H1 (cell line): ENCODE measurements at regions of chr7 and their contacts with region 1.

Region 1: DNA sequence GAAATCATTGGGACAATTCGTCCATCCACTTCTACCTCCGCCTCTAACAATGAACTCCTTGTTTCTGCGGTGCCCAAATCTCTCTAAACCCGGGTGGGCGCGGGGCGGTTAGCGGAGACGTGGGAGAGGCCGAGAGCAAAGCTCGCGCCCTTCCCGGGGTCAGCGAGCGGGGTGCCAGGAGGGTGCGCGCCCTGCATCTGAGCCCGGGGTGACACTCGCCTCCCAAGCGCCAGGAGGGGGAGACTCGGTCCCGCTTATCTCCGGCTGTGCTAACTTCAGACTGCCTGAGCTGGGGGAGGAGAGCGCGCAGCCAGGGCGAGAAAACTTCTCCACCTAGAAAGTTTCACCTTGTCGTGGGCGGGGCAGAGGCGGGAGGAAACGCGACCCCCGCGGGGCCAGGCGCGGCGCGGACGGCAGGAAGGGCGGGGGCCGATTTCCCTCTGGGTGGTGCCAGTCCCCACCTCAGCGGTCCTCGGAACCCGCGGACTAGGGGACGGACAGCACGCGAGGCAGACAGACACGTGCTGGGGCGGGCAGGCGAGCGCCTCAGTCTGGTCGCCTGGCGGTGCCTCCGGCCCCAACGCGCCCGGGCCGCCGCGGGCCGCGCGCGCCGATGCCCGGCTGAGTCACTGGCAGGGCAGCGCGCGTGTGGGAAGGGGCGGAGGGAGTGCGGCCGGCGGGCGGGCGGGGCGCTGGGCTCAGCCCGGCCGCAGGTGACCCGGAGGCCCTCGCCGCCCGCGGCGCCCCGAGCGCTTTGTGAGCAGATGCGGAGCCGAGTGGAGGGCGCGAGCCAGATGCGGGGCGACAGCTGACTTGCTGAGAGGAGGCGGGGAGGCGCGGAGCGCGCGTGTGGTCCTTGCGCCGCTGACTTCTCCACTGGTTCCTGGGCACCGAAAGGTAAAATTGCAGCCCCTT is at the start of gene MET:
- DNase-seq: peak in 1 of 2 experiments; percentile 83
- H3K4me3 ChIP-seq: peak within 1 kb of the TSS; percentile 45 to 80 (median 74)
- H3K27ac ChIP-seq: no peak within 1 kb of the TSS
- H3K4me1 ChIP-seq: peaks cover 0 to 9% (median 2%) of the 10 kb centered on the region in 4 experiments; a peak in 5 of 7 replicates
- H3K27me3 ChIP-seq: peaks cover 0 to 21% (median 7%) of the 10 kb centered on the region in 4 experiments; a peak in 5 of 7 replicates
- CTCF ChIP-seq: peak; percentile 49 to 75 (median 66)
- EP300 ChIP-seq: no peak
- POLR2A ChIP-seq: peak in 1 of 2 experiments; percentile 38; a peak in 1 of 3 replicates
- RAD21 ChIP-seq: peak; percentile 79 to 81
- total RNA-seq, gene MET: 12.9 and 15.1 TPM in 2 replicates

Region 2: GRCh38 chr7:116290740-116291139 is 381.2 kb before region 1 on chr7:
- CTCF ChIA-PET with region 1: no interaction called
- POLR2A ChIA-PET with region 1: no interaction called
- DNase-seq: no peak
- H3K4me3 ChIP-seq: no peak overlapping the region
- H3K27ac ChIP-seq: no peak overlapping the region
- H3K4me1 ChIP-seq: no peaks in the 10 kb centered on the region
- H3K27me3 ChIP-seq: no peaks in the 10 kb centered on the region
- CTCF ChIP-seq: peak in 2 of 3 experiments; percentile 5 to 37; a peak in 2 of 4 replicates
- EP300 ChIP-seq: no peak
- POLR2A ChIP-seq: no peak
- RAD21 ChIP-seq: peak; percentile 23 to 47; a peak in 3 of 4 replicates

Region 3: GRCh38 chr7:116621649-116622048 is 50.3 kb before region 1 on chr7:
- CTCF ChIA-PET with region 1: no interaction called
- POLR2A ChIA-PET with region 1: no interaction called
- DNase-seq: no peak
- H3K4me3 ChIP-seq: no peak overlapping the region
- H3K27ac ChIP-seq: no peak overlapping the region
- H3K4me1 ChIP-seq: peaks cover under 1 to 4% (median under 1%) of the 10 kb centered on the region in 4 experiments; a peak in 4 of 7 replicates
- H3K27me3 ChIP-seq: no peaks in the 10 kb centered on the region
- CTCF ChIP-seq: no peak
- EP300 ChIP-seq: no peak
- POLR2A ChIP-seq: no peak
- RAD21 ChIP-seq: no peak

Region 4: GRCh38 chr7:116641551-116642153 is 30.3 kb before region 1 on chr7:
- CTCF ChIA-PET with region 1: no interaction called
- POLR2A ChIA-PET with region 1: no interaction called
- DNase-seq: no peak
- H3K4me3 ChIP-seq: no peak overlapping the region
- H3K27ac ChIP-seq: no peak overlapping the region
- H3K4me1 ChIP-seq: no peaks in the 10 kb centered on the region
- H3K27me3 ChIP-seq: no peaks in the 10 kb centered on the region
- CTCF ChIP-seq: no peak
- EP300 ChIP-seq: no peak
- POLR2A ChIP-seq: no peak
- RAD21 ChIP-seq: no peak

Region 5: DNA sequence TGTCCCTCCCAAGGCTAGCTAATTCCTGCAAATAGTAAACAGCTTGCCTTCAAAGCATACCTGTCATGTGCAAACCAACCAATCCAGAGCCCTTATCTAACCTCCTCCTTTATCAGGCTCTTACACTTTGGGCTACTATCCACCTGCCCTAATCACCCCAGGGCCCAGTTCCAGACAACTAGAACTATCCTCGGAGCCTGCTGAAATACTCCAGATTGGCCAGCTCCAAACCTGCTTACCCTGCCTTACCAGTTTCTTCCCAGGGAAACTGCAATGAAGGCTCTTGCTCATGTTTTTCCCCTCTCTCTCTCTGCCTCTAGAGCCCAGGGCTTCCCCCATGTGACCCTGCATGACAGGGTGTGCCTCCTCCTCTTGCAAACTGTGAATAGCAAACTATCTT is 109.0 kb after region 1 on chr7:
- CTCF ChIA-PET with region 1: interaction called, 12 read pairs
- POLR2A ChIA-PET with region 1: no interaction called
- DNase-seq: no peak
- H3K4me3 ChIP-seq: no peak overlapping the region
- H3K27ac ChIP-seq: no peak overlapping the region
- H3K4me1 ChIP-seq: peaks cover 0 to 10% (median 8%) of the 10 kb centered on the region in 4 experiments; a peak in 4 of 7 replicates
- H3K27me3 ChIP-seq: no peaks in the 10 kb centered on the region
- CTCF ChIP-seq: no peak
- EP300 ChIP-seq: no peak
- POLR2A ChIP-seq: no peak
- RAD21 ChIP-seq: no peak

Region 6: DNA sequence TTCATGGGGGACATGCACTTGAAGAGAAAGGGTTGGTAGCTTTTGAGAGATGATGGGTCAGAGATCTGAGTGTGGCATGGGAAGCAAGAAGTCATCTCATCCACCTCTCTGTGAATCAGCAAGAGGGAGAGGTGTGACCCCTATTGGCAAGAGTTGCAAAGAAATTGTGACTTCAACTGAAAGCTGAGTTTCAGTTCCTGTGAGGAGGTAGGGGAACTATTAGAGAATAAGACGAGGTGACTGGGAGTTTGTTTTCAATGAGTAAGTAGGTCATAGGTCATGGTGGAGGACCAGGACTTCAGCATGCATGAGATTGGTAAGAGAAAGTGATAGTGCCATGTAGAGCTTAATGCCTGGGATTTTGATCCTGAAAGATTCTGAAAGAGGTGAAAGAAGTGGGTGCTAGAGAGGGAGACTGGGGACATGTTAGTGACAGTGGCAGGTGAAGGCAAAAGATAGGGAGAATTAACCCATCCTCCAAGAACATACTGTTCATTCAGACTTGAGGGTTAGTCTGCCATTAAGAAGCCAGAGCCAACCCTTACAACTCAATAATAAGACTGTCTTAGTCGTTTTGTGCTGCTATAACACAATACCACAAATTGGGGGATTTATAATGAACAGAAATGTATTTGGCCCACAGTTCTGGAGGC is 115.0 kb after region 1 on chr7:
- CTCF ChIA-PET with region 1: interaction called, 12 read pairs
- POLR2A ChIA-PET with region 1: no interaction called
- DNase-seq: no peak
- H3K4me3 ChIP-seq: no peak overlapping the region
- H3K27ac ChIP-seq: no peak overlapping the region
- H3K4me1 ChIP-seq: peaks cover 0 to 8% (median 6%) of the 10 kb centered on the region in 4 experiments; a peak in 4 of 7 replicates
- H3K27me3 ChIP-seq: no peaks in the 10 kb centered on the region
- CTCF ChIP-seq: peak in 2 of 3 experiments; percentile 67 to 68; a peak in 3 of 4 replicates
- EP300 ChIP-seq: no peak
- POLR2A ChIP-seq: no peak
- RAD21 ChIP-seq: peak; percentile 84 to 89